Naive thymus-derived CD4-positive, alpha-beta T cell (primary cell): ENCODE measurements at regions of chr2 and their contacts with region 1.

Region 1: DNA sequence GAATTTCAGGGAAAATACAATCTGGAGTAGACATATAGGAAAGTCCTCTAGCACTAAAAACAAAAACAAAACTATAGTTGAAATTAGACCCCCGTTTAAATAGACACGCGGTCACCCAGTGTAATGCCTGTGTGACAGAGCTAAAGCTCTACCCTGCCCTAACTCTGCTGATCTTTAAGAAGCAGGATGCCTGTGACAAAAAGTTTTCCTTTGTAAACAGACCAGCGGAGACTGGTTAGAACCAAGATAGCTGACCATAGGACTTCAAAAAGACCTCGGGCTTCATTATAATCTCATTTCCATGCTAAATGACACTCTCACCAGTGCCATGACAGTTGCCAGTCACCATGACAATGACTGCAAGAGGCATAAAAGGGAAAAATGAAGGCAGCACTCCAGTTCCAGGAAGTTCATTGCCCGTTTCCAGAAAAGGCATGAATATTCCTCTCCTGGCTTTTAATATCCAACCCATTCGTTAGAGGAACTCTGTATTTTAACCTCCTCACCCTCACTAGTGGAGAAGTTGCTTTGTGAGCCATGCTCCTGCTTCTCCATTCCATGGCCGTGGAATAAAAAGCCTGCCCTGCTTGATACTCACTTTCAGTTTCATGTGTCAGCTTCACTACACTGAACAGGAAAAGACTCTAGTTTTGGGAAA is 157.2 kb upstream of the COPS8 start:
- DNase-seq: no peak
- ATAC-seq: no peak
- H3K4me3 ChIP-seq: peak overlapping the region; percentile 35
- H3K4me3 Mint-ChIP-seq: peak overlapping the region; percentile 60 to 86 (median 78)
- H3K27ac ChIP-seq: no peak overlapping the region
- H3K27ac Mint-ChIP-seq: peak overlapping the region in 5 of 9 donors; percentile 16 to 81 (median 56)
- H3K4me1 ChIP-seq: peaks cover 0 to 6% of the 10 kb centered on the region in 2 donors
- H3K4me1 Mint-ChIP-seq: peaks cover 0 to 7% (median 0%) of the 10 kb centered on the region in 7 donors
- H3K27me3 ChIP-seq: no peaks in the 10 kb centered on the region
- H3K27me3 Mint-ChIP-seq: peaks cover 0 to 42% (median 21%) of the 10 kb centered on the region in 5 donors

Region 2: DNA sequence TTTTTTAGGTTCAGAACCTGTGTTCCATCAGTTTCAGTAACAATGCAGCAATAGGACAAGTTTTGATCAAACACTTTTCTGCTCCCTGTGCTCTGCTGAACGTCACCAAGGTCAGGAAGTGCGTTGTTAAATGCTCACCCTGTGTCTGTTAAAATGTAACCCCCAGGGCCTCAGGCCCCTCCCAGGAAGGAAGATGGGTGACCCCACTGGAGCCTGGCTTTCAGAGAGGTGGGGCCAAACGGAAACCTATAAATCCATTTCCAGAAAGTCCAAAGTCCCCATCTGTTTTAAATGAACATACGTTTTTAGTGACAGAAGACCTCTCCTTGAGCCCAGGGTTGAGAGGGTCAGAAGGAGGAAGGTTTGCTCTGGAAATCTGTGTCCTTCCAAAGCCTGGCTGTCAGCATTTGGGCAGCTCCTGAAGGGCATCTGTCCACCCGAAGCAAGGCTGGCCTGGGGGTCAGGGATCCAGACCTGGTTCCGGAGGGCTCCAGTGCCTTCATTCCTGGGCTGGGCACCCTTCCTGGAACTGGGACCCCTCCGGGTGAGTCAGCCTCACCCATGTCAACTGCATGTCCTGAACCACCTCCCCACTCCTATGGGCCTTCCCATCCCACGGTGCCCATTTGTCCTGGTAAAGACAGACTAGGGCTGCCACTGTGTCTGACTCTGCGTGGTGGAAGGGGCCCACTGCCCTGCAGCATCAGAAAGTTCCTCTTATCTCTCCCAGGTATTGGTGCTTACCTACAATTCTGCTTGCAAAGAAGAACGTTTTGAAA is 39.8 kb after region 1 on chr2:
- CTCF ChIA-PET with region 1: no interaction called
- POLR2A ChIA-PET with region 1: interaction called, 4 read pairs
- intact Hi-C with region 1: loop called in 1 of 2 experiments (anchors 5 kb)
- DNase-seq: peak in 7 of 9 donors; percentile 71 to 87 (median 82)
- ATAC-seq: peak; percentile 93
- H3K4me3 ChIP-seq: peak overlapping the region; percentile 38
- H3K4me3 Mint-ChIP-seq: peak overlapping the region; percentile 73 to 92 (median 78)
- H3K27ac ChIP-seq: peak overlapping the region; percentile 85
- H3K27ac Mint-ChIP-seq: peak overlapping the region; percentile 80 to 99 (median 95)
- H3K4me1 ChIP-seq: peaks cover 16 to 41% of the 10 kb centered on the region in 2 donors
- H3K4me1 Mint-ChIP-seq: peaks cover 21 to 63% (median 41%) of the 10 kb centered on the region in 7 donors
- H3K27me3 ChIP-seq: no peaks in the 10 kb centered on the region
- H3K27me3 Mint-ChIP-seq: peaks cover 0 to 4% (median 0%) of the 10 kb centered on the region in 5 donors

Region 3: DNA sequence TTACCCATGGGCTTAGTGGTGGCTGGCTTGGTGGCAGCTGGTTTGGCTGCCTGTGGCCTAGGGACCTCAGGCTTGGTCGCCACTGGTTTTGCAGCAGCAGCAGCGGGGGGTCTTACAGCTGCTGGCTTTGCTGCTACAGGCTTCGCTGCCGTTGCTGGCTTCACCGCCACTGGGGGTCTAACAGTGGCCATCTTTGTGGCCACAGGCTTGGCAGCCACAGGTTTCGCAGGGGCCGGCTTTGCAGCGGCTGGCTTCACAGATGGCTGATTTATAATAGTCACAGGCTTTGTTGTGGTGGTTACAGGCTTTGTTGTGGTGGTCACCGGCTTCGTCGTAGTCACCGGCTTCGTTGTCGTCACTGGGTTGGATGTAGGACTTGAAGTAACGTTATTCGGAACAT is 407.6 kb after region 1 on chr2:
- CTCF ChIA-PET with region 1: no interaction called
- POLR2A ChIA-PET with region 1: no interaction called
- intact Hi-C with region 1: no loop called
- DNase-seq: no peak
- ATAC-seq: no peak
- H3K4me3 ChIP-seq: no peak overlapping the region
- H3K4me3 Mint-ChIP-seq: no peak overlapping the region
- H3K27ac ChIP-seq: no peak overlapping the region
- H3K27ac Mint-ChIP-seq: no peak overlapping the region
- H3K4me1 ChIP-seq: no peaks in the 10 kb centered on the region
- H3K4me1 Mint-ChIP-seq: no peaks in the 10 kb centered on the region
- H3K27me3 ChIP-seq: no peaks in the 10 kb centered on the region
- H3K27me3 Mint-ChIP-seq: no peaks in the 10 kb centered on the region